Activated CD4-positive, alpha-beta T cell treated with anti-CD3 and anti-CD28 coated beads for 36 hours (primary cell): ENCODE measurements at regions of chr11 and their contacts with region 1.

Region 1: DNA sequence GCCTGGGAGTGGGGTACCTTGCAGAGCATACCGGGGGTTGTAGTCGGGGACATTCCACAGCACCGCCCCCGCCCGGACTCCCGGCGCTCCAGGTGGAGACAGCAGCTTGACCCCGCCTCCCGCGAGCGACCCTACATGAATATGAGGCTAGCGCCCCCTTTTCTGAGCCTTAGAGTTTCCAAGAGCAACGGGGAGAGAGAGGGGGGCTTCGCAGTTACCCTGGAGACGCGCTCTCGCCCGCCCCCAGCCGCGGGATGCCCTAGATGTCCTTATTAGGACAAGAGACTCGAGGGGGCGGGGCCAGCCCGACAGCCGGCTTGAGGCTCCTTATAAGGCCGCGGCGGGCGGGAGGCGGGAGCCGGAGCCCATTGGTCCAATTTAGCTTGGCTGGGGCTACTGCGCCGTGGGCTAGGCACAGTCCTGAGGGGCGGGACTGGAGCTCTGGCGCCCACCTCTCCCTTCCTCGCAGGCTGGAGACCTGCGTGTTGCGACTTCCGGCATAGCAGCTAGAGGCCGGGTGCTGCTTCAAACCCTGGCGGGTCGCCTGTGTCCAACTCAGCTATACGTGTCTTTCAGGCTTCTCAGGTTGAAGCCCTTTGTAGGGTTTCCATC is 927 bp upstream of the MUS81 start:
- DNase-seq: peak; percentile 99
- ATAC-seq: peak; percentile 73
- H3K4me3 Mint-ChIP-seq: peak overlapping the region; percentile 91
- H3K27ac Mint-ChIP-seq: peak overlapping the region; percentile 99
- H3K4me1 Mint-ChIP-seq: peaks cover 42% of the 10 kb centered on the region
- H3K27me3 Mint-ChIP-seq: no peaks in the 10 kb centered on the region

Region 2: DNA sequence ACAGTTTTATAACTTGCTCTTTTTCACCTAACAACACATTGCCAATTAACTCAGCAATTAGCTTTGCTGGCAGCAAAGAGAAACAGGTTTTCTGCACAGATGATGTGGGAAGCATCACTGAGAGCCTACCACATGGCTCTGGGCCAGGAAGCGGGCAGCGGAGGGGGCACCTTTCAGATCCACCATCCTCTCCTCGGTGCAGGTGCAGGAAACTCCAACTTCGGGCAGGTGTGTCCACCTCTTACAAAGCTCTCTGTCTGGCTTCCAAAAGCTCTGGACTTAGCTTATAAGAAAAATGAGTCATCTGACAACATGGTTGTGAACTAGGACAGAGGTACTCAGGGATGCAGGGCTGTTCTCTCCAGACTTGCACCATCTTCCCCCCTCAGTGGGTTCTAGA is 1423.3 kb before region 1 on chr11:
- CTCF ChIA-PET with region 1: no interaction called
- POLR2A ChIA-PET with region 1: no interaction called
- intact Hi-C with region 1: no loop called
- DNase-seq: no peak
- ATAC-seq: no peak
- H3K4me3 Mint-ChIP-seq: no peak overlapping the region
- H3K27ac Mint-ChIP-seq: no peak overlapping the region
- H3K4me1 Mint-ChIP-seq: no peaks in the 10 kb centered on the region
- H3K27me3 Mint-ChIP-seq: no peaks in the 10 kb centered on the region

Region 3: DNA sequence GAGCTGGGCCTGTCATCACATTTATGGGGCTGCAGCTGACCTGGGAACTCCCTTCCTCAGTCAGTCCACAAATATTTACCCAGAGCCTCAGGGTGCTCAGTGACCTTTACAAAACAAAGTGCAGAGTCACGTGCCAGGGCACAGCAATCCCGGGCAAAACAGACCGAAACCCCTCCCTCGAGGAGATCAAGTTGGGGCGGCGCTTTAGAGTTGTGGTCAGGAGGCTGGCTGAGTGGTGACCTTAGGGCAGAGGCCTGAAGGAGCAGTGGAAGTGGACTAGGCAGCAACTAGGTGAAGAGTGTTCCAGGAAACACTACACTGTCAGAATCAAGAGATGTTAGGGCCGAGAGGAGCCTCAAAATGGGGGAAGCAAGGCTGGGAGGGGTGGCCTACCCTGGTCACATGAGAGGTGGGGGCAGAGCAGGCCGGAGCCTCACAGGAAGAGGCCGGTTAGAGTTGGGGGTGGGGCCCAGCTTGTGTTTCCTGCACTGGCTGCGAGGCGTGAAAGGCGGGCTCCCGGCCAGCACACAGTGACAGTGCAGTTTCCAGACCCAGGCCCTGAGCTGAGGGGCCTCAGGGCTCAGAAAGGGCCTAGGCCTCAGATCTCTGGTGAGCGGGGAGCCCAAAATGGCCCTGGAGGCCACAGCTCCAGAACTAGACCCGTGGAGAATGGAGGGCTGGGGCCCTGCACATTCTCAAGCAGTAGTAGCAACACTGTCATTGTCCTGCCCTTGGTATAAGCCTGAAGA is 440.4 kb before region 1 on chr11:
- CTCF ChIA-PET with region 1: no interaction called
- POLR2A ChIA-PET with region 1: interaction called, 3 read pairs
- intact Hi-C with region 1: loop called in 1 of 2 experiments (anchors 2 kb)
- DNase-seq: peak; percentile 97
- ATAC-seq: peak; percentile 48
- H3K4me3 Mint-ChIP-seq: peak overlapping the region; percentile 100
- H3K27ac Mint-ChIP-seq: peak overlapping the region; percentile 99
- H3K4me1 Mint-ChIP-seq: peaks cover 34% of the 10 kb centered on the region
- H3K27me3 Mint-ChIP-seq: peaks cover 6% of the 10 kb centered on the region

Region 4: GRCh38 chr11:65627202-65627601 is 232.1 kb before region 1 on chr11:
- CTCF ChIA-PET with region 1: no interaction called
- POLR2A ChIA-PET with region 1: no interaction called
- intact Hi-C with region 1: no loop called
- DNase-seq: no peak
- ATAC-seq: no peak
- H3K4me3 Mint-ChIP-seq: no peak overlapping the region
- H3K27ac Mint-ChIP-seq: no peak overlapping the region
- H3K4me1 Mint-ChIP-seq: no peaks in the 10 kb centered on the region
- H3K27me3 Mint-ChIP-seq: no peaks in the 10 kb centered on the region

Region 5: DNA sequence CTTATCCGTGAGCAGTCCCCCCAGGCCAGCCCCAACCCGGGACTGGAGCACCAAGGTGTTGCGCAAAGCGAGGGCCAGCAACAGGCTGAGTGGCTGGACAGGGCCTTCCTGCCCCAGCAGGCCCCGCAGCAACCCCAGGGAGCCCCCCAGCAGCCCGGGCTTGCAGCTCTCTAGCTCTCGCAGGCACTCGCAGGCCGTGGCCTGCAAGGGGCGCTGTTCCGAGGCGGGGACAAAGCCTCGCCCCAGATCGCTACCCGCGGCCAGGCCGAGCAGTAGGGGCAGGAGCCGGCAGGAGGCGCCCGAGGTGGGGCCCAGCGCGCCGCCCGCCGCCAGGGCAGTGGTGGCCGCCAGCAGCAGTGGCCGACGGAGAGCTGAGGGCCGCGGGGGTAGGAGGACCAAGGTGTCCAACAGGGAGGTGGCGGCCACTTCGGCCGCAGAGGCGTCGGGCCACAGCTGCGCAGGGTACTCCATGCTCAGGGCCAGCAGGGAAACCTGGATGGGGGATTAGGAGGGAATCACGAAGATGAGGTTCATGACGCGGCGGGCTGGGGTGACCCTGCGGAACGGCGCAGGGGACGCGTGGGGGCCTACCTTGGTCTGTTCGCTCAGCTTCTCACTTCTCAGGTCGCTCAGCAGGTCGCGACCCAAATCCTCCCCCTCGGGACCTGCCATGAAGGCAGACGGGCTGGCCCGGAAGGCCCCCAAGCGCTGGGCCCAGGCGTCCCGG is 79.3 kb before region 1 on chr11:
- CTCF ChIA-PET with region 1: interaction called, 6 read pairs
- POLR2A ChIA-PET with region 1: interaction called, 6 read pairs
- intact Hi-C with region 1: loop called in 1 of 2 experiments (anchors 1 kb)
- DNase-seq: peak; percentile 94
- ATAC-seq: peak; percentile 81
- H3K4me3 Mint-ChIP-seq: peak overlapping the region; percentile 87
- H3K27ac Mint-ChIP-seq: peak overlapping the region; percentile 83
- H3K4me1 Mint-ChIP-seq: peaks cover 27% of the 10 kb centered on the region
- H3K27me3 Mint-ChIP-seq: peaks cover 10% of the 10 kb centered on the region

Region 6: DNA sequence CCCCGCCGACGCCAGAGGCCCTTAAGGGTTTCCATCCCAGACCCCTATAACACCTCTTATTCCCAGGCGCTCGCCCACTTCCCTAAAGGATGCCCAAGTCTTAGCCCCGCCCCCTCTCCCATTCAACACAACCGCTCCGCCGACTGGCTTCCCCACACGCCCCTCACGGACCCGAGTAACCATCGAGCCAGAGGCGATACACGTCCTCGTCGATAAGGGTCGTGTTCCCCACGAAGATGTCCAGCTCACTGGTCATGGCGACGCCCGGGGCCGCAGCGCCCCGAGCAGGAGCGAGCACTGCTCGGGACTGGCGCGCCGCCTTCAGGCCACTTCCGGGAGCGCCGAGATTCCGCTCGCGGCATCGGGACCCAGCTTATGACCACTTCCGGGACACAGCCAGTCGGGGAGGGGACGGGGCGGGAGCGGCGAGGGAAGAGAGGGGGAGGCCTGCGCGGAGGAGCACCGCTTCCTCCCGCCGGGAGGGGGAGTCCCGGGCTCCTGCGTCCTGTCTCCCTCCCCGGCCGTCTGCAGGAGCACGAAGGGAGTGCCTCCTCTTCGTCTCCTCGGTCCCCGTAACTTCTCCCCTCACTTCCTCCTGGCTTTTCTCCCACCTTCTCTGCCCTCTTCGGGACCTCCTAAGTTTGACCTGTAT is 29.0 kb after region 1 on chr11 and contains the start of gene FIBP:
- CTCF ChIA-PET with region 1: interaction called, 210 read pairs
- POLR2A ChIA-PET with region 1: interaction called, 68 read pairs
- intact Hi-C with region 1: loop called (anchors 1 kb)
- DNase-seq: peak; percentile 99
- ATAC-seq: peak; percentile 68
- H3K4me3 Mint-ChIP-seq: peak within 1 kb of the TSS; percentile 94
- H3K27ac Mint-ChIP-seq: peak within 1 kb of the TSS; percentile 95
- H3K4me1 Mint-ChIP-seq: peaks cover 57% of the 10 kb centered on the region
- H3K27me3 Mint-ChIP-seq: no peaks in the 10 kb centered on the region
- total RNA-seq, gene FIBP: 95.4 to 121 TPM

Region 7: DNA sequence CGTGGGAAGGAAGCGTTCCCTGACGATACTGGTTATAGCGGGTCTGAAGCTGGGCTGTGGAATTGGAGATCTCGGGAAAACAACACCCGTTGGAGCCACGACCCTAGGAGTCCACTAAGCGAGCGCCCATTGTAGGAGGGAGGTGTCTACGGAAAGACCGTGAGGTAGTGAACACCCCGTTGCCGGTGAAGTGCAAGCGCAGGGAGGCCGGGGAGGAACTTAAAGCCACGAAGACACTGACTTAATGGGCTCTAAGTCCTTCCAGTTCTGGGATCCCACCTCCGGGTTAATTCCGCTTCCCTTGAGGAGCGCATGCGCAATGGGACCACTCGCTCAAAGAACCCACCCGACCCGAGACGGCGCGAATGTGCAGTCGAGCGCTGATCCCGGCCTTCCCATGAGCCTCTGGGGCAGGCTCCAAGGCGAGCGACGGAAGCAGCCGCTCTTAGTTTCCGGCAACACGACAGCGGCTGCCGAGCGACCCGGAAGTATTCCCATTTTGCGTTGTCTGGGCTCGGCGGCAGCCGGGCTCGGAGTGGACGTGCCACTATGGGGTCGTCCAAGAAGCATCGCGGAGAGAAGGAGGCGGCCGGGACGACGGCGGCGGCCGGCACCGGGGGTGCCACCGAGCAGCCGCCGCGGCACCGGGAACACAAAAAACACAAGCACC is 102.1 kb after region 1 on chr11 and contains the start of gene SART1:
- CTCF ChIA-PET with region 1: interaction called, 5 read pairs
- POLR2A ChIA-PET with region 1: no interaction called
- intact Hi-C with region 1: loop called in 1 of 2 experiments (anchors 1 kb)
- DNase-seq: peak; percentile 98
- ATAC-seq: peak; percentile 91
- H3K4me3 Mint-ChIP-seq: peak within 1 kb of the TSS; percentile 92
- H3K27ac Mint-ChIP-seq: peak within 1 kb of the TSS; percentile 97
- H3K4me1 Mint-ChIP-seq: peaks cover 37% of the 10 kb centered on the region
- H3K27me3 Mint-ChIP-seq: no peaks in the 10 kb centered on the region
- total RNA-seq, gene SART1: 54.7 to 84.5 TPM

Region 8: GRCh38 chr11:66268283-66268951 is 409.1 kb after region 1 on chr11 and contains the start of gene RAB1B:
- CTCF ChIA-PET with region 1: interaction called, 3 read pairs
- POLR2A ChIA-PET with region 1: no interaction called
- intact Hi-C with region 1: loop called in 1 of 2 experiments (anchors 1 kb)
- DNase-seq: peak; percentile 100
- ATAC-seq: peak; percentile 88
- H3K4me3 Mint-ChIP-seq: peak within 1 kb of the TSS; percentile 100
- H3K27ac Mint-ChIP-seq: peak within 1 kb of the TSS; percentile 97
- H3K4me1 Mint-ChIP-seq: peaks cover 28% of the 10 kb centered on the region
- H3K27me3 Mint-ChIP-seq: no peaks in the 10 kb centered on the region
- total RNA-seq, gene RAB1B: 114 to 147 TPM